Activated CD4-positive, alpha-beta T cell treated with anti-CD3 and anti-CD28 coated beads for 36 hours (primary cell): ENCODE measurements at regions of chr7 and their contacts with region 1.

Region 1: GRCh38 chr7:28020302-28020940 is 160.2 kb downstream of the JAZF1 start:
- DNase-seq: peak; percentile 44
- ATAC-seq: peak; percentile 89
- H3K4me3 Mint-ChIP-seq: no peak overlapping the region
- H3K27ac Mint-ChIP-seq: no peak overlapping the region
- H3K4me1 Mint-ChIP-seq: no peaks in the 10 kb centered on the region
- H3K27me3 Mint-ChIP-seq: no peaks in the 10 kb centered on the region

Region 2: GRCh38 chr7:27150568-27151340 is 869.7 kb before region 1 on chr7:
- CTCF ChIA-PET with region 1: no interaction called
- POLR2A ChIA-PET with region 1: no interaction called
- intact Hi-C with region 1: no loop called
- DNase-seq: peak; percentile 82
- ATAC-seq: peak; percentile 83
- H3K4me3 Mint-ChIP-seq: peak overlapping the region; percentile 35
- H3K27ac Mint-ChIP-seq: no peak overlapping the region
- H3K4me1 Mint-ChIP-seq: peaks cover 36% of the 10 kb centered on the region
- H3K27me3 Mint-ChIP-seq: peaks cover 83% of the 10 kb centered on the region

Region 3: GRCh38 chr7:27689591-27690164 is 330.7 kb before region 1 on chr7:
- CTCF ChIA-PET with region 1: no interaction called
- POLR2A ChIA-PET with region 1: no interaction called
- intact Hi-C with region 1: loop called (anchors 1 to 2 kb)
- DNase-seq: peak; percentile 50
- ATAC-seq: peak; percentile 87
- H3K4me3 Mint-ChIP-seq: no peak overlapping the region
- H3K27ac Mint-ChIP-seq: no peak overlapping the region
- H3K4me1 Mint-ChIP-seq: no peaks in the 10 kb centered on the region
- H3K27me3 Mint-ChIP-seq: peaks cover 9% of the 10 kb centered on the region

Region 4: GRCh38 chr7:27842094-27842692 is 178.2 kb before region 1 on chr7:
- CTCF ChIA-PET with region 1: no interaction called
- POLR2A ChIA-PET with region 1: no interaction called
- intact Hi-C with region 1: loop called in 1 of 2 experiments (anchors 5 kb)
- DNase-seq: no peak
- ATAC-seq: no peak
- H3K4me3 Mint-ChIP-seq: no peak overlapping the region
- H3K27ac Mint-ChIP-seq: no peak overlapping the region
- H3K4me1 Mint-ChIP-seq: peaks cover 17% of the 10 kb centered on the region
- H3K27me3 Mint-ChIP-seq: no peaks in the 10 kb centered on the region

Region 5: GRCh38 chr7:27936047-27936767 is 84.2 kb before region 1 on chr7:
- CTCF ChIA-PET with region 1: interaction called, 5 read pairs
- POLR2A ChIA-PET with region 1: no interaction called
- intact Hi-C with region 1: loop called in 1 of 2 experiments (anchors 5 kb)
- DNase-seq: no peak
- ATAC-seq: no peak
- H3K4me3 Mint-ChIP-seq: no peak overlapping the region
- H3K27ac Mint-ChIP-seq: no peak overlapping the region
- H3K4me1 Mint-ChIP-seq: no peaks in the 10 kb centered on the region
- H3K27me3 Mint-ChIP-seq: no peaks in the 10 kb centered on the region

Region 6: DNA sequence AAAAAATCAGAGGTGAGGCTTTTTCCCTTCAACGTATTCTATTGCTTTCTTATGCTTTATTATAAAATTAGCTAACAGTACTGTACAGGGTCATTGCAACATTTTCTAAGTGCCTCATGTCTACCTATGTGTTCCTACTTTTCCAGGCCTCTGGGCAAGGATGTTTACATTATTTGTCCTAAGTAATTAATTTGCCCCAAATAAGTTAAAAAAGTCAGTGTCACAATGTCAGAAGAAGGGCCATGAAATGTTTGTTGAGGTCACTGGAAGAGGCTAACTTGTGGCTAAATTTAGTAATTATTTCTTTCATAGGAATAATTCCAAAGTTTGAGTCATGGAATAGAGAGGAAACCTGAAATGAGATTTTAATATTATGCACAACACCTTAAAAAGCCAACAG is 53.6 kb after region 1 on chr7:
- CTCF ChIA-PET with region 1: no interaction called
- POLR2A ChIA-PET with region 1: no interaction called
- intact Hi-C with region 1: no loop called
- DNase-seq: no peak
- ATAC-seq: no peak
- H3K4me3 Mint-ChIP-seq: no peak overlapping the region
- H3K27ac Mint-ChIP-seq: no peak overlapping the region
- H3K4me1 Mint-ChIP-seq: peaks cover 5% of the 10 kb centered on the region
- H3K27me3 Mint-ChIP-seq: no peaks in the 10 kb centered on the region